PC-3 (cell line): ENCODE measurements at regions of chr6 and their contacts with region 1.

Region 1: GRCh38 chr6:108558372-108559096 is 2.2 kb upstream of the FOXO3 start:
- DNase-seq: peak; percentile 96
- ATAC-seq: peak; percentile 41
- H3K4me3 ChIP-seq: peak overlapping the region; percentile 95
- H3K27ac ChIP-seq: peak overlapping the region; percentile 44; the same call in 1 of the 2 replicates
- H3K4me1 ChIP-seq: peaks cover 10% of the 10 kb centered on the region
- H3K27me3 ChIP-seq: no peaks in the 10 kb centered on the region
- CTCF ChIP-seq: no peak

Region 2: GRCh38 chr6:108570517-108570916 is 12.0 kb after region 1 on chr6:
- CTCF ChIA-PET with region 1: no interaction called
- POLR2A ChIA-PET with region 1: no interaction called
- intact Hi-C with region 1: no loop called
- DNase-seq: peak; percentile 13
- ATAC-seq: no peak
- H3K4me3 ChIP-seq: no peak overlapping the region
- H3K27ac ChIP-seq: no peak overlapping the region
- H3K4me1 ChIP-seq: peaks cover 17% of the 10 kb centered on the region
- H3K27me3 ChIP-seq: no peaks in the 10 kb centered on the region
- CTCF ChIP-seq: no peak; the same call in 1 of the 2 replicates

Region 3: GRCh38 chr6:108673602-108674001 is 115.1 kb after region 1 on chr6:
- CTCF ChIA-PET with region 1: no interaction called
- POLR2A ChIA-PET with region 1: no interaction called
- intact Hi-C with region 1: loop called (anchors 5 kb)
- DNase-seq: peak; percentile 78
- ATAC-seq: peak; percentile 94
- H3K4me3 ChIP-seq: no peak overlapping the region
- H3K27ac ChIP-seq: peak overlapping the region; percentile 87
- H3K4me1 ChIP-seq: peaks cover 41% of the 10 kb centered on the region
- H3K27me3 ChIP-seq: no peaks in the 10 kb centered on the region
- CTCF ChIP-seq: no peak

Region 4: GRCh38 chr6:108689247-108690161 is 131.0 kb after region 1 on chr6:
- CTCF ChIA-PET with region 1: no interaction called
- POLR2A ChIA-PET with region 1: no interaction called
- intact Hi-C with region 1: loop called (anchors 1 kb)
- DNase-seq: peak; percentile 92
- ATAC-seq: peak; percentile 63
- H3K4me3 ChIP-seq: no peak overlapping the region
- H3K27ac ChIP-seq: peak overlapping the region; percentile 76
- H3K4me1 ChIP-seq: peaks cover 56% of the 10 kb centered on the region
- H3K27me3 ChIP-seq: no peaks in the 10 kb centered on the region
- CTCF ChIP-seq: no peak

Region 5: DNA sequence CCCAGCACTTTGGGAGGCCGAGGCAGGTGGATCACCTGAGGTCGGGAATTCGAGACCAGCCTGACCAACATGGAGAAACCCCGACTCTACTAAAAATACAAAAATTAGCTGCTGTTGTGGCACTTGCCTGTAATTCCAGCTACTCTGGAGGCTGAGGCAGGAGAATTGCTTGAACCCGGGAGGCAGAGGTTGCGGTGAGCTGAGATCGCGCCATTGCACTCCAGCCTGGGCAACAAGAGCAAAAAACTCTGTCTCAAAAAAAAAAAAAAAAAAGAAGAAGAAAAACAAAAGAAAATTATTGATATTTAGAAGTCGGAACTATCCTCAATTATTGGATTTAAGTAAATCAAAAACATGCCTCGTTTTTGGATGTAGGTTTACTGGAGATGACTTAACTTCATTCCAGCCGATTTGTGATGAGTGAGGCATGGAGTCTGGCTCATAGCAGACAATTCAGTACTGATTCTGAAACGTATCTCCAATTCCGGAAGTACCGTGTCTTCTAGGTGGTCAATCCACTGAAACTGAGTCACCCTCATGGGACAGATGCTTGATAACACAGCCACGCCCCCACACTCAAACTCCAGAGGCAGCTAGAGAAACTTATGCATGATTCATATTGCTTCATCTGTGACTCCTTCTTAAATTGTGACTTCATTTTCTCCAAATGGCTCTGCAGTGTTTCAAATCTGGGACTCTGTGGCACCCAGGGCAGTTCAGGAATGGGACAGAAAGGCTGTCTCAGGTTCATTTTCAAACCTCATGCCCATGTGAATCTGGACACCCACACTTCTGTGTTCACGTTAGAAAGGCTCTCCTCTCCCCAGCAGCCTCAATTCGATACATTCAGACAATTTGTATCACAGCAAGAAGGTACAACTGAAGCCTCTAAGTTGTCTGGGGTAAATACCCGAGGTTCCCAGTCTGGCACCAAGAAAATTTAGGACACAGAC is 179.3 kb after region 1 on chr6:
- CTCF ChIA-PET with region 1: no interaction called
- POLR2A ChIA-PET with region 1: no interaction called
- intact Hi-C with region 1: loop called (anchors 5 kb)
- DNase-seq: peak; percentile 90
- ATAC-seq: peak; percentile 31
- H3K4me3 ChIP-seq: no peak overlapping the region; the same call in 1 of the 2 replicates
- H3K27ac ChIP-seq: peak overlapping the region; percentile 86
- H3K4me1 ChIP-seq: peaks cover 79% of the 10 kb centered on the region
- H3K27me3 ChIP-seq: no peaks in the 10 kb centered on the region
- CTCF ChIP-seq: no peak

Region 6: GRCh38 chr6:108835218-108835850 is 276.8 kb after region 1 on chr6:
- CTCF ChIA-PET with region 1: interaction called, 6 read pairs
- POLR2A ChIA-PET with region 1: no interaction called
- intact Hi-C with region 1: loop called (anchors 5 kb)
- DNase-seq: peak; percentile 78
- ATAC-seq: peak; percentile 95
- H3K4me3 ChIP-seq: no peak overlapping the region
- H3K27ac ChIP-seq: no peak overlapping the region
- H3K4me1 ChIP-seq: 0 out of 2 replicates have a peak, but pooled peaks cover 6% of the 10 kb centered on the region
- H3K27me3 ChIP-seq: no peaks in the 10 kb centered on the region
- CTCF ChIP-seq: peak; percentile 82